Right cardiac atrium (tissue), 5 donors: ENCODE measurements at regions of chr1 and their contacts with region 1.

Region 1: GRCh38 chr1:46340404-46341221 is at the start of gene NSUN4:
- DNase-seq: peak; percentile 94 to 97 (median 96)
- ATAC-seq: peak; percentile 95 to 96
- H3K4me3 ChIP-seq: peak within 1 kb of the TSS; percentile 88
- H3K27ac ChIP-seq: peak within 1 kb of the TSS; percentile 99
- H3K4me1 ChIP-seq: no peaks in the 10 kb centered on the region
- H3K27me3 ChIP-seq: no peaks in the 10 kb centered on the region
- total RNA-seq, gene NSUN4: 12.6 to 18.7 (median 13.7) TPM

Region 2: GRCh38 chr1:46219551-46220523 is 120.8 kb before region 1 on chr1:
- intact Hi-C with region 1: no loop called
- DNase-seq: peak in 1 of 3 donors; percentile 32
- ATAC-seq: no peak
- H3K4me3 ChIP-seq: no peak overlapping the region
- H3K27ac ChIP-seq: no peak overlapping the region
- H3K4me1 ChIP-seq: no peaks in the 10 kb centered on the region
- H3K27me3 ChIP-seq: no peaks in the 10 kb centered on the region

Region 3: DNA sequence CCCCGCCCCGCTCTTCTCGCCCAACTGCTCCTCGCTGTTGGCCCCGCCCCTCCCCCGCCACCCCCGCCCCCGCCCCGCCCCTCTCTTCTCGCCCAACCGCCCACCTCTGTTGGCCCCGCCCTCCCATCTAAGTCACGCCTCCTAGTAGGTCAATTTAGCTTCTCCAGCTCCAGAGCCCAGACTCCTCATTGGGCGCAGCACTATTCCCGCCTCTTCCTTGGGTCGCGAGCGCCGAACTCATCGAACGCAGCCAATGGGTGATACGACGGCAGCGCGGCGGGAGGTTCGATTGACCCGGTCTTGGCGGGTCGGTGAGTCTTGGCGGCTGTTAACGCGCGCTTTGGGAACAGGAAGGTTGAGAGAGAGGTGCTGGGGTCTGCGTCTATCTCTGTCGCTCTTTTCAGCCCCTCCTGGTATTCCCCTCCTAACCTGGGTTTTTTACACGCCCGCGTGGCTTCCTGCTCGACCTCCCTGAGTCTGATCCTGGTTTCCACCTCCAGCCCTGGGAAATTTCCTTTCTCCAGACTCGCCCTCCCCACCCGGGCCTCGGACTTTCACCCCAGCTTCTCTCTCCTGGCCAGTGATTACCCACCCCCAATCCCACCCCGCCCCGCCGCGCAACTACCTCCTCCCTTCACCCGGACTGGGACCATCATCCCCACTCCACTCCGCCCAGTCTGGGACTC is 93.0 kb before region 1 on chr1 and contains the start of gene RAD54L:
- intact Hi-C with region 1: loop called in 1 of 4 experiments (anchors 10 kb)
- DNase-seq: peak; percentile 98
- ATAC-seq: peak; percentile 97
- H3K4me3 ChIP-seq: peak within 1 kb of the TSS; percentile 73
- H3K27ac ChIP-seq: peak within 1 kb of the TSS; percentile 65
- H3K4me1 ChIP-seq: peaks cover 2% of the 10 kb centered on the region
- H3K27me3 ChIP-seq: no peaks in the 10 kb centered on the region
- total RNA-seq, gene RAD54L: 0.56 to 0.89 (median 0.74) TPM in 3 of 4 donors, not detected in the other

Region 4: DNA sequence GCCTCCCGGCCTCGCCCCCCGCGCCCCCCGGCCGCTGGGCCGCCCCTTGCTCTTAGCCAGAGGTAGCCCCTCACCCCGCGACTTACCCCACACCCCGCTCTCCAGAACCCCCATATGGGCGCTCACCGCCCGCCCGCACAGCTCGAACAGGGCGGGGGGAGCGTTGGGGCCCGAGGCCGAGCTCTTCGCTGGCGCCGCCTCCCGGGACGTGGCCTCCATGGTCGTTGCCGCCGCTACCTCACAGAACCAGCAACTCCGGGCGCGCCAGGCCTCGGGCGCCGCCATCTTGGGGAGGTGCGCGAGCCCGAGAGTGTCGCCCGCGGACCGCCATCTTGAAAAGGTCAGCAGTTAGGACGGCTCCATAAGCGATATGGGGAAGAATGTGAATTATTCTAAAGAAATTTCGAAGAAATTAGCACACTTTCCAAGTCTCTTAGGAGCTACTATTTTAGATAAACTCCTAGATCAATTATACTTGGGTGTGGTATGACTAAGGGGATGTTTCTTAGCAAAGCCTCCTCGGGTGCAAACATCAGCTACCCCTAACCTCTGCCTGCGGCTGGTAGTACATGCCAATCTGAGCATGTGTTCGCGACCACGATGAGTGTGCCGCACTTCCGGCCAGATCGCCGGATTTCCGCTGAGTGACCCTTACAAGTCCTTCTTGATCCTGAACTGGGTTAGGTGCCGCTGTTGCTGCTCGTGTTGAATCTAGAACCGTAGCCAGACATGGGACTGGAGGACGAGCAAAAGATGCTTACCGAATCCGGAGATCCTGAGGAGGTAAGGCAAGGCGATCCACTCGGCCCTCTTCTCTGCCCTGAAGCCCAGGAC is 37.4 kb before region 1 on chr1 and contains the starts of genes LRRC41 and UQCRH:
- intact Hi-C with region 1: loop called in 1 of 4 experiments (anchors 5 kb)
- DNase-seq: peak; percentile 95 to 98 (median 97)
- ATAC-seq: peak; percentile 94
- H3K4me3 ChIP-seq: peak within 1 kb of the TSS; percentile 72
- H3K27ac ChIP-seq: peak within 1 kb of the TSS; percentile 97
- H3K4me1 ChIP-seq: peaks cover 15% of the 10 kb centered on the region
- H3K27me3 ChIP-seq: no peaks in the 10 kb centered on the region
- total RNA-seq, gene LRRC41: 37.2 to 46.3 (median 40.1) TPM
- total RNA-seq, gene UQCRH: 664 to 870 (median 705) TPM